Panc1 (cell line): ENCODE measurements at regions of chr5 and their contacts with region 1.

Region 1: DNA sequence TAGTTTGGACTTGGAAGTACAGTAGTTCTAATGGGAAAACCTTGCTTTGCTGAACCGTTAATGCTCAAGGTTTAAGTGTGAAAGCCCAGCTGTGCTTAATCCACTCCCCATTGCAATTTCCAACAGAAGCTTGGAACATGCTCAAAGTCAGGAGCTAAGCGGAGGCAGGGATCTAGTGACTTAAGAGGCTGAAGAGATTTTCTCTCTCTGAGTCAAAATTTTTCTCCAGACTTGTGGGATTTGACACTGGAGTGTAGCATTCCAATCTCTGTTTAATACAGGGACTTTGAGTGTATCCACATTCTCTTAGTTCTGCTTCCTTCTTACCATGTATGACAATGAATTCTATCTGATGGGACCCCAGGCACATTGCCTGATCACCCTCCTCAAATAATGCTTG is 471.8 kb downstream of the KIF4B start:
- DNase-seq: no peak
- ATAC-seq: no peak
- H3K4me3 ChIP-seq: no peak overlapping the region
- H3K27ac ChIP-seq: no peak overlapping the region
- H3K4me1 ChIP-seq: no peaks in the 10 kb centered on the region
- H3K27me3 ChIP-seq: no peaks in the 10 kb centered on the region
- CTCF ChIP-seq: no peak

Region 2: GRCh38 chr5:155402927-155403670 is 82.3 kb before region 1 on chr5:
- CTCF ChIA-PET with region 1: interaction called, 13 read pairs
- POLR2A ChIA-PET with region 1: no interaction called
- in situ Hi-C with region 1: no loop called
- intact Hi-C with region 1: no loop called
- DNase-seq: no peak
- ATAC-seq: no peak
- H3K4me3 ChIP-seq: no peak overlapping the region
- H3K27ac ChIP-seq: no peak overlapping the region
- H3K4me1 ChIP-seq: no peaks in the 10 kb centered on the region
- H3K27me3 ChIP-seq: no peaks in the 10 kb centered on the region
- CTCF ChIP-seq: no peak

Region 3: GRCh38 chr5:155711882-155712281 is 226.5 kb after region 1 on chr5:
- CTCF ChIA-PET with region 1: no interaction called
- POLR2A ChIA-PET with region 1: no interaction called
- in situ Hi-C with region 1: no loop called
- intact Hi-C with region 1: no loop called
- DNase-seq: no peak
- ATAC-seq: no peak
- H3K4me3 ChIP-seq: no peak overlapping the region
- H3K27ac ChIP-seq: no peak overlapping the region
- H3K4me1 ChIP-seq: no peaks in the 10 kb centered on the region
- H3K27me3 ChIP-seq: no peaks in the 10 kb centered on the region
- CTCF ChIP-seq: no peak